Endothelial cell of umbilical vein (primary cell): ENCODE measurements at regions of chr2 and their contacts with region 1.

Region 1: DNA sequence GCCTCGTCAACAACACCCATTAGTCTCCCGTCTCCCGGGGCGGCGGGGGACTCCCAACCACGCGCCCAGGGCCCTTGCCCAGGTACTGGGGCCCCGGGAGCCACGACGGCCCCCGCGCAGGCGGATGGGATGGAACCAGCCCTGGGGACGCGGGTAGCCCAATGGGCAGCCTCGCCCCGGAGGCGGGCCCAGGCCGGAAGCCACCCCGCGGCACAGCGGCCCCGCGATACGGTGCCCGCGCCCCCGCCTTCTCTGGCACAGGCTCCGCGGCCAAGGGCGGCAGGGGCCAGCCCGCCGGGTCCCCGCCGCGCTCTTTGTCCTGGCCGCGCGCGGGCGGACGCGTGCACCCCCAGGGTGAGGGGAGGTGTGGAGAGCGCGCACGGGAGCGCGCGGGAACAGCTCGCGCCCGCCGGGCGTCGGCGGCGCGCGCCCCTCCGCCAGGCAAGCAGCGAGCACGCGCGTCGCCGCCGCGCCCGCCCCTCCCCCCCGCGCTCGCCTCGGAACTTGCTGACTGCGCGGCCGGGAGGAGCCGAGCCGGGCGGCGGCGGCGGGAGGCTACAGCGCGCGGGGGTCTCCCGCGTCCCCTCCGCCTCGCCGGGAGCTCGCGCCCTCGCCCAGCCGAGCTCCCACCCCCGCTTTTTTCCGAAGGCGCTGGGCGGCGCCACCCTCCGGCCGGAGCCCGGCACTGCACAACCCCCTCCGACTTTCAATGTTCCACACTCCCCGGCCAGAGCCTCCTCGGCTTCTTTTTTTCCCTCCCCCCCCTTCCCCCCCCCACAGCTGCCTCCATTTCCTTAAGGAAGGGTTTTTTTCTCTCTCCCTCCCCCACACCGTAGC is at the start of gene UBE2E3:
- DNase-seq: peak; percentile 80
- H3K4me3 ChIP-seq: peak within 1 kb of the TSS; percentile 82 to 98 (median 96)
- H3K27ac ChIP-seq: peak within 1 kb of the TSS; percentile 82
- H3K4me1 ChIP-seq: peaks cover 39% of the 10 kb centered on the region
- H3K27me3 ChIP-seq: no peaks in the 10 kb centered on the region
- CTCF ChIP-seq: peak; percentile 52 to 80
- POLR2A ChIP-seq: peak; percentile 77
- total RNA-seq, gene UBE2E3: 81.5 and 89.2 TPM in 2 replicates

Region 2: DNA sequence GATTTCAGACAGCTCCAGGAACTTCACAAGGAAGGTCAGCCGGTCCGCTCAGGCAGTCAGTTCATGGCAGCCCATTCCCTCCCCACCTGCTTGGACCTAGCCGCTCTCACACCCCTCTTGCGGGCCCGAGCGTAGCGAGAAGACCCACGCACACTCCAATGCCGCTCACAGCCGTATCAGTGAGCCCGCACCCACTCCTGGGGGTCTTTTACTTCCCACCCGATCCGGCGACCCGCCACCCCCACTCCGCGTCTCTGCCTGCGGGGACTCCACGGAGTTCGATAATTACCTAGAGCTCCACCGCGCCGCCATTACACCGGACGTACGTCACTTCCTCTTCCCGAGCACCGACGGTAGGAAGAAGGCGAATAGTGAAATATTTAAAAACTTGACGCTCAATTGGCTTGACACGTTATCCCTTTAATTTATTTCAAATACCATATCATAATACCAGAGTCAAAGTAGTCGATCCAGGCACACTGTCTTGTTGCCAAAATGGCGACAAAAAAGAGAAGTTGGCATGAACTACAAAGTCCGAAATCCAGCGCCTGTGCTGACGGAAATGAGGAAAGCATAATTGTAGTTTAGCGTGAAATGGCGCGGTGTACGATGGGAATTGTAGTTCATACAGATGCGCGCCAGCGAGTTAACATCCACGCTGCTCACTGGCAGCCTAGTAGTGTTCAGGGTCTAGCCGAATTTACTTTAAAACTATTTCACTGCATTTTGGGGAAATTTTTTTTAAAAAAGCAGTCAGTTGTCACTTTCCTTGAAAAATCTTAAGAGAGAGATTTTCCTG is 973.3 kb before region 1 on chr2 and contains the start of gene CWC22:
- CTCF ChIA-PET with region 1: no interaction called
- POLR2A ChIA-PET with region 1: no interaction called
- dilution Hi-C with region 1: no loop called
- intact Hi-C with region 1: loop called (anchors 1 kb)
- DNase-seq: peak; percentile 95
- H3K4me3 ChIP-seq: peak within 1 kb of the TSS; percentile 85 to 92 (median 90)
- H3K27ac ChIP-seq: peak within 1 kb of the TSS; percentile 99
- H3K4me1 ChIP-seq: peaks cover 16% of the 10 kb centered on the region
- H3K27me3 ChIP-seq: no peaks in the 10 kb centered on the region
- CTCF ChIP-seq: no peak
- POLR2A ChIP-seq: peak; percentile 70
- total RNA-seq, gene CWC22: 13.5 and 15.7 TPM in 2 replicates

Region 3: GRCh38 chr2:180520206-180520605 is 460.1 kb before region 1 on chr2:
- CTCF ChIA-PET with region 1: interaction called, 11 read pairs
- POLR2A ChIA-PET with region 1: no interaction called
- dilution Hi-C with region 1: no loop called
- intact Hi-C with region 1: loop called (anchors 5 kb)
- DNase-seq: peak; percentile 21
- H3K4me3 ChIP-seq: no peak overlapping the region
- H3K27ac ChIP-seq: no peak overlapping the region
- H3K4me1 ChIP-seq: peaks cover 40% of the 10 kb centered on the region
- H3K27me3 ChIP-seq: no peaks in the 10 kb centered on the region
- CTCF ChIP-seq: no peak
- POLR2A ChIP-seq: no peak

Region 4: DNA sequence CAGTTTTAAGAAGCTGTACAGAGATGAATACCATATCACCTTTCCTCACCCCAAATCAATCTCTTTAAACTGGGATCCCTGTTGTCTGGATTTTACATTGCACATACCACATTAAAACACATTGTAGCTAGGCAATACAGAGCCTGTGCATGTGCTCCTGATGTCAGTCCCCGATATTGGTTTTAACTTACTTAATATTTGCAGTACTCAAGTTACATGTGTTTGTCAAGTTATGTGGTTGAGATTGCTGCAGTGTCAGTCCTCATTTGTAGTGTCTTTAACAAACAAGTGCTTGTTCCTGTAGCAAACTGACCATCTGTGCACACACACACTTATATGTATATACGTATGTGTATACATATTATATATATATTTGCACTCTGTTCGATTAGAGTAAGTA is 10.3 kb before region 1 on chr2:
- CTCF ChIA-PET with region 1: interaction called, 10 read pairs
- POLR2A ChIA-PET with region 1: no interaction called
- dilution Hi-C with region 1: no loop called
- intact Hi-C with region 1: no loop called
- DNase-seq: no peak
- H3K4me3 ChIP-seq: no peak overlapping the region
- H3K27ac ChIP-seq: no peak overlapping the region
- H3K4me1 ChIP-seq: no peaks in the 10 kb centered on the region
- H3K27me3 ChIP-seq: no peaks in the 10 kb centered on the region
- CTCF ChIP-seq: no peak
- POLR2A ChIP-seq: no peak

Region 5: DNA sequence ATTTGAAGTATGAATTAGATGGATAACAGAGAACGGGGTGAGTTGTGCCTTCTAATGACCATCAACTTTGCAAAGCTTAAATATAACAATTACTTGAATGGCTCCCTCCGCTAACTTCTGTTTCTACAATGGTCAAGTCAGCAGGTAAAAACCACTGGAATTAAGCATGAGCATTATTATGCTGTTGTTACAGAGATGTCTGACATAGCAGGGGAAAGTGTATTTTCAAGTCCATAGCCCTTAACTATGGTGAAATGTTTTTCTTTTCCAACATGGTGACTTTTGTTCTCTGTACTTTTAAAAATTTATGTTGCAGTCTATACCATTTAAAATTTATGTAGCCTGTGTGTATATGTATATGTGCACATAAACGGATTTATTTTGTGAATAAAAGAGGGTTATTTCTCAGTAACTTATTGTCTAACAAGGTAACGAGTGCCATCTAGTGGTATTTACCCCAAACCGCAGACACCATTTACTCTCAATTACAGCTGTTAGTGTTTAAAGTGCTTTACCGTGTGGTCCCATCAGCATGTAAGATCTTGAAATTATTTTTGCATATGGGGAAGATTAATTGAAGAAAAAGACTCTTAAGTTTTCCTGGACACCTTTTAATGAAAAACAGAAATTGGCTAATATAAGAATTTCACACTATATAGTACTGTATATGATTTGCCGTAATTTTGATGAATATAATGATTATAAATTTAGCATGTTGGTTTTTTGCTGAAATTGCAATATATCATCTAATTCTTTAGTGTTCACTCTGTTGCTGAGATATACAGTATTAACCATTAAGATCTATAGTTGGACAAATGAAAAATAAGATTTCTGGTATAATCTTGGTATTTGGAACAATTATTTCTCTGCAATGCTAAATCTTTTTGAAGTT is 78.3 kb after region 1 on chr2:
- CTCF ChIA-PET with region 1: interaction called, 10 read pairs
- POLR2A ChIA-PET with region 1: no interaction called
- dilution Hi-C with region 1: no loop called
- intact Hi-C with region 1: loop called (anchors 5 kb)
- DNase-seq: peak; percentile 53
- H3K4me3 ChIP-seq: no peak overlapping the region
- H3K27ac ChIP-seq: no peak overlapping the region
- H3K4me1 ChIP-seq: no peaks in the 10 kb centered on the region
- H3K27me3 ChIP-seq: no peaks in the 10 kb centered on the region
- CTCF ChIP-seq: peak; percentile 35 to 43
- POLR2A ChIP-seq: no peak

Region 6: GRCh38 chr2:181289698-181290097 is 309.4 kb after region 1 on chr2:
- CTCF ChIA-PET with region 1: no interaction called
- POLR2A ChIA-PET with region 1: no interaction called
- dilution Hi-C with region 1: no loop called
- intact Hi-C with region 1: no loop called
- DNase-seq: no peak
- H3K4me3 ChIP-seq: no peak overlapping the region
- H3K27ac ChIP-seq: no peak overlapping the region
- H3K4me1 ChIP-seq: no peaks in the 10 kb centered on the region
- H3K27me3 ChIP-seq: no peaks in the 10 kb centered on the region
- CTCF ChIP-seq: no peak
- POLR2A ChIP-seq: no peak